ENCODE measurements at regions of chr3 and their contacts with region 1.

Region 1: GRCh38 chr3:132343018-132343612 is 25.9 kb downstream of the ACP3 start:
- DNase-seq: peak; percentile 72
- H3K4me3 Mint-ChIP-seq: no peak overlapping the region
- H3K27ac Mint-ChIP-seq: peak overlapping the region; percentile 35
- H3K4me1 Mint-ChIP-seq: peaks cover 48% of the 10 kb centered on the region
- H3K27me3 Mint-ChIP-seq: no peaks in the 10 kb centered on the region
- CTCF ChIP-seq: peak; percentile 92

Region 2: DNA sequence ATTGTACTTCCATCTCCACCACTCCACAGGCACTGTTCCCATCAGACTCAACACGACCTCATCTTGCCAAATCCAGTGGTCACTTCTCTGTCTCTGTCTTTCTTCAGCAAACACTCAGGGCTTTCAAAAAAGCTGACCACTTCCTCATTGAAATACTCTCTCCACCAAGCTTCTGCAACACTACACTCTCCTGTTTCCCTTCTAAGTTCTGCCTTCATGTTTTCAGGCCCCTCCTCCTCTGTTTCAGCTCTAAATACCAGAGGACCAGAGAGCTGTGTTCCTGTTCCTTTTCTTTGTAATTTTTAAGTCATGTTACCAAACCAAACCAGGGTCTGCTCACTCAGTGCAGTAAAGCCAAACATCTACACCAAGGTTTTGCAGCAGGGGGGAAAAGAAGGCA is 59.7 kb before region 1 on chr3:
- CTCF ChIA-PET with region 1: interaction called, 15 read pairs
- intact Hi-C with region 1: no loop called
- DNase-seq: peak; percentile 37
- H3K4me3 Mint-ChIP-seq: no peak overlapping the region
- H3K27ac Mint-ChIP-seq: peak overlapping the region; percentile 7
- H3K4me1 Mint-ChIP-seq: peaks cover 29% of the 10 kb centered on the region
- H3K27me3 Mint-ChIP-seq: no peaks in the 10 kb centered on the region
- CTCF ChIP-seq: no peak

Region 3: DNA sequence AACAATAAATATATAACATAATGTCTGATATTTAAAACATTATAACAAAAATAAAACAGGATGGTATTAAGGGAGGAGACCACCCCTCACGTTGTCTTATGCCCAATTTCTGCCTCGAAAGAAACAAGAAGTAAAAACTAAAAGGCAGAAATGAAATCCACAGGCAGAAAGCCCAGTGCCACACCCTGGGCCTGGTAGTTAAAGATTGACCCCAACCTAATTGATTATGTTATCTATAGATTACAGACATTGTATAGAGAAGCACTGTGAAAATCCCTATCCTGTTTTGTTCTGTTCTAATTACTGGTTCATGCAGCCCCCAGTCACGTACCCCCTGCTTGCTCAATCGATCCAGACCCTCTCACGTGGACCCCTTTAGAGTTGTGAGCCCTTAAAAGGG is 48.2 kb before region 1 on chr3:
- CTCF ChIA-PET with region 1: interaction called, 5 read pairs
- intact Hi-C with region 1: loop called (anchors 5 kb)
- DNase-seq: no peak
- H3K4me3 Mint-ChIP-seq: no peak overlapping the region
- H3K27ac Mint-ChIP-seq: no peak overlapping the region
- H3K4me1 Mint-ChIP-seq: peaks cover 40% of the 10 kb centered on the region
- H3K27me3 Mint-ChIP-seq: no peaks in the 10 kb centered on the region
- CTCF ChIP-seq: no peak

Region 4: DNA sequence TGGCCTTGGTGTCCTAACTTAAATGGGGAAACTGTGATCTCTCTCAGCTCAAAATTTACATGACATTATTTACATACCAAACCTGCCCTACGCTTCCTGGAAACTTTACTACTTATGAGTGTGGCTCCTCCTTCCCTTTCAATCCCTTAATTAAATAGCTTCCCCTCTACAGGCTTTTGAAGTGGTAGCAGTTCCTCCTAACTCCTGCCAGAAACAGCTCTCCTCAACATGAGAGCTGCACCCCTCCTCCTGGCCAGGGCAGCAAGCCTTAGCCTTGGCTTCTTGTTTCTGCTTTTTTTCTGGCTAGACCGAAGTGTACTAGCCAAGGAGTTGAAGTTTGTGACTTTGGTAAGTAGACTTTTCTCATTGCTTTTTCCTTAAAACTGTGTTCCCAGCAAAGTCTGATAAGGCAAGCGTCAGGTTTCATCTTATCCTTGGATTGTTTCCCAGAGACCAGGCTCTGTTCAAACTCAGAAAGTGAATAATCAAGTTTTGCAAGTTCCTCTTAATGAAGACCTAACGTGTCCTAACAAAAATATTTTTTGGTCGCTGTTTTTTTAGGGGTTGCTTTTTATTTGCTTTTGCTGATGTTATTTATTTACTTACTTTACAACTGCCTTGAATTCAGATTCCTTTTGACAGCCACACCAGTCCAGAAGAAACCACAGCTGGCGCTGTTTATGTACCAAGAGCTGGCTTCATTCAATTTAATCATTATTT is 25.7 kb before region 1 on chr3 and contains the start of gene ACP3:
- CTCF ChIA-PET with region 1: interaction called, 22 read pairs
- intact Hi-C with region 1: loop called (anchors 1 kb)
- DNase-seq: peak; percentile 74
- H3K4me3 Mint-ChIP-seq: peak within 1 kb of the TSS; percentile 62
- H3K27ac Mint-ChIP-seq: peak within 1 kb of the TSS; percentile 77
- H3K4me1 Mint-ChIP-seq: peaks cover 33% of the 10 kb centered on the region
- H3K27me3 Mint-ChIP-seq: no peaks in the 10 kb centered on the region
- CTCF ChIP-seq: no peak
- total RNA-seq, gene ACP3: 3.8 and 5.8 TPM in 2 replicates

Region 5: DNA sequence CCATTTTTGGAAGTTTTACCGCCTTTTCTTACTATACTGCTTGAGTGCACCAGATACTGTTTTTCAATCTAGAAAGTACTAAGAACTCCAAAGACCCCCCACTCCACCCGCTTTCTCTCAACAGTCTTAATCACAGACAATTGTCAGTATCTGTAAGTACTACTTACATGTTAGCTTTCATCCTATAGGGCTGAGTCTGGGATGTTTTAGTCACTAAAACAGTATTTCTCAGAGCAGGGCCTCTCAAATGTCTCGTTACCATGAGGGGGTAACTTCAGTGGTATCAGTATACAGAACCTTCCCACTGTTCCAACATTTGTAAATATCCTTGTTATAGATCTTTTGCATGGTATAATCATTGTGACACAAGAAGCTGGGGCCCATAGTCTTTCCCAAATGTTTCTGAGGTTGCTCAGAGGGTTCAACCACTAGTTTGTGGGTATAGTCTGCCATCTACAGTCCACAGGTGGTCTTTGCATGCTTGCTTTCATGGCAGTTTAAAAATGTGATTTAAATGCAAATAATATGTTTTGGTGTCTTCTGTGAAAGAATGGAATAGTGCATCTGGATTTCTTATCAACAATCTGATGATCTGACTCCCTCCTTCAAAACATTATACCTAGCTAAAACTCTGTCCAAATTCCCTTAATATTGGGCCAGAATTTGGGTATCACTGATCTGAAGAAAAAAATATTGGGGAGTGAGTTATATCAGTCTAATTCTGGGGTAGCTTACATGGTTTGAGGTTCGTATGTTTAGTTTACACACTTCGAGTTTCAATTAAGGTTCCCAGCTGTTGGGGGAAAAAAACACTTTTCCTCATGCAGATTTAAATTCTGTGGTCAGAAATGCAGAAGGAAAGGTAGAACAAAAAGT is 56.2 kb after region 1 on chr3:
- CTCF ChIA-PET with region 1: interaction called, 9 read pairs
- intact Hi-C with region 1: loop called (anchors 2 kb)
- DNase-seq: peak; percentile 63
- H3K4me3 Mint-ChIP-seq: no peak overlapping the region
- H3K27ac Mint-ChIP-seq: no peak overlapping the region
- H3K4me1 Mint-ChIP-seq: no peaks in the 10 kb centered on the region
- H3K27me3 Mint-ChIP-seq: no peaks in the 10 kb centered on the region
- CTCF ChIP-seq: peak; percentile 87

Region 6: DNA sequence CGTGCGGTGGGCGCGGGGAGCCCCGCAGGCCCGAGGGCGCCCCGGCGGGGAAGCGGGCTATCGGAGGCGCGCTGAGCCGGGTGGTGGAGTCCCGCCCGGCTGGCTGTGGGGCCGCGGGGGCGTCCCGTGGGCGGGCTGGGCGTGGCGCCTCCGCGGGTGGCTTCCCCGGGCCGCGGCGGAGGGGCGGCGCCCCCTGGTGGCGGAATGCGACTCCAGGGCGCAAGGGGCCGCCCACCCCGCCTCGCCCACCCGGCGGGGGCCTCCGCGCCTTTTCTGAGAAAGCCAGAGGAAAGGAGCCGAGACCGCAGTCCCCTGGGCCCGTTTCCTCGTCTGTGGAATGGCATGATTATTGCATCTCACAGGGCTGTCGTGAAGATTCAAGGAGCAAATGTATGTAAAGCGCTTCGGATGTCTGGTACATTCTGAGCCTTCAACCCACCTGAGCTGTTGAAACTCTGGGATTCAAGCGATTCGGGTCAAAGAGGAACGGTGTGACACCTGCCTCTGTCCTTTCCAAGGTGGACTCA is 1584.5 kb after region 1 on chr3:
- CTCF ChIA-PET with region 1: no interaction called
- intact Hi-C with region 1: no loop called
- DNase-seq: peak; percentile 51
- H3K4me3 Mint-ChIP-seq: no peak overlapping the region
- H3K27ac Mint-ChIP-seq: no peak overlapping the region
- H3K4me1 Mint-ChIP-seq: no peaks in the 10 kb centered on the region
- H3K27me3 Mint-ChIP-seq: peaks cover 95% of the 10 kb centered on the region
- CTCF ChIP-seq: peak; percentile 94

Measured in Calu3 (cell line).